Activated T-helper 1 cell treated with anti-CD3 and anti-CD28 coated beads, Interleukin-12 subunit alpha, Interleukin-12 subunit beta, Interleukin-2, Interleukin-4 antibody, amounts not matched to agents 30 ng/mL and 10 ng/mL and 1 ng/mL, durations not matched to agents 14 hours and 24 hours and 36 hours (primary cell): ENCODE measurements at regions of chr17 and their contacts with region 1.

Region 1: DNA sequence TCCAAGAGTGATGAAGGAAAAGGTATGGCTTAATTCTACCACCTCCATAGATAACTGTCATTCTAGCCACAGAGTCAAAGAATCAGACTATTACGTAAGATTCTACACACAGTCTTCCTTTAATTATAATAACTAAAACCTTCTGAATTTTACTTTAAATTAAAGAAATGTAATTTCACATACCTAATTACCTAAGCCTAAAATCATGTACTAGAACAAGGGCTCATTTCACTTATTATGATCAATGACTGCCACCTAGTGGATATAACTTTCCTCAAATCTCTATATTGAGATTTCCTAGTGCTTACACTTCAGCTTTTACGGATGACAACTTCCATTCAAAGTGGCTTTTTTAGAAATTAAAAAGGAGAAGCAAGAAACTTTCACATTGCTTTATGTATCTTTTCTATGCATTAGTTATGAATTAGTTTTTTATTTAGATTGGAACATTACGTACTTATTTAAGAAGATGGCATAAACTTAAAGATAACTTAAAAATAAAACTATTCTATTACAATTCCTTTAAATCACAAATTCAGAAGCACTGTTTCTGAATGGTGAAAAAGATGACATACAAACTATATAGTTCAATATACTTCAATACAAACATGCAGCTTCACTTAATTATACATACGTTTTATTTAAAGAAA is 18.2 kb upstream of the ABCA10 start:
- DNase-seq: no peak
- H3K4me3 Mint-ChIP-seq: no peak overlapping the region
- H3K27ac Mint-ChIP-seq: no peak overlapping the region
- H3K4me1 Mint-ChIP-seq: no peaks in the 10 kb centered on the region
- H3K27me3 Mint-ChIP-seq: no peaks in the 10 kb centered on the region

Region 2: GRCh38 chr17:68771867-68772515 is 474.9 kb before region 1 on chr17:
- intact Hi-C with region 1: loop called (anchors 1 kb)
- DNase-seq: no peak
- H3K4me3 Mint-ChIP-seq: peak overlapping the region; percentile 56
- H3K27ac Mint-ChIP-seq: no peak overlapping the region
- H3K4me1 Mint-ChIP-seq: peaks cover 12% of the 10 kb centered on the region
- H3K27me3 Mint-ChIP-seq: no peaks in the 10 kb centered on the region

Region 3: GRCh38 chr17:68777243-68777855 is 469.5 kb before region 1 on chr17:
- intact Hi-C with region 1: loop called (anchors 1 kb)
- DNase-seq: no peak
- H3K4me3 Mint-ChIP-seq: no peak overlapping the region
- H3K27ac Mint-ChIP-seq: no peak overlapping the region
- H3K4me1 Mint-ChIP-seq: peaks cover 7% of the 10 kb centered on the region
- H3K27me3 Mint-ChIP-seq: peaks cover 11% of the 10 kb centered on the region

Region 4: DNA sequence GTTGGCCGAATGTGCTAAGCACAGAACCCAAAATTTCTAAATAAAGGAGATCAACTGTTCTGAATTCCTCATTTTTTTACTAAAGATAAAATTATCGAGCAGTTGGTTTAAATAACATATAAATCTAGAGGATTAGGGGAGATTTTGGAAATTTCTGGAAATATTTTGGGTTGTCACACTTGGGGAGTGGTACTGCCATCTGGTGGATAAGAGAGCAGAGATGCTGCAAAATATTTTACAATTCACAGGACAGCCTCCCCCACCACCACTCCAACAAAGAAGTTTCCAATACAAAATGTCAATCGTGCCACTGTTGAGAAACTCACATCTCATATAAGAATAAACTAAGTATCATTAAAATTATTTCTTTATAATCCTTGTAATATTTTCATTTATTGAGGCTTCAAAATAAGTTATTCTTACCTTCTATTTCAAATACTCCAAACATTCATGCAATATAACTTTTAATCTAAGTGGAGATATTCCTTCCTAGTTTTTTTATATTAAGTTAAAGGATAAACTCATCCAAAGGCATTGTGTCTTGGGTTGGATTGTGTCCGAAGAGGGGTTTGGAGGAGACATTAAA is 274.6 kb before region 1 on chr17:
- intact Hi-C with region 1: loop called (anchors 10 kb)
- DNase-seq: no peak
- H3K4me3 Mint-ChIP-seq: no peak overlapping the region
- H3K27ac Mint-ChIP-seq: no peak overlapping the region
- H3K4me1 Mint-ChIP-seq: no peaks in the 10 kb centered on the region
- H3K27me3 Mint-ChIP-seq: no peaks in the 10 kb centered on the region